Left colon (tissue), 2 donors: ENCODE measurements at regions of chr20 and their contacts with region 1.

Region 1: DNA sequence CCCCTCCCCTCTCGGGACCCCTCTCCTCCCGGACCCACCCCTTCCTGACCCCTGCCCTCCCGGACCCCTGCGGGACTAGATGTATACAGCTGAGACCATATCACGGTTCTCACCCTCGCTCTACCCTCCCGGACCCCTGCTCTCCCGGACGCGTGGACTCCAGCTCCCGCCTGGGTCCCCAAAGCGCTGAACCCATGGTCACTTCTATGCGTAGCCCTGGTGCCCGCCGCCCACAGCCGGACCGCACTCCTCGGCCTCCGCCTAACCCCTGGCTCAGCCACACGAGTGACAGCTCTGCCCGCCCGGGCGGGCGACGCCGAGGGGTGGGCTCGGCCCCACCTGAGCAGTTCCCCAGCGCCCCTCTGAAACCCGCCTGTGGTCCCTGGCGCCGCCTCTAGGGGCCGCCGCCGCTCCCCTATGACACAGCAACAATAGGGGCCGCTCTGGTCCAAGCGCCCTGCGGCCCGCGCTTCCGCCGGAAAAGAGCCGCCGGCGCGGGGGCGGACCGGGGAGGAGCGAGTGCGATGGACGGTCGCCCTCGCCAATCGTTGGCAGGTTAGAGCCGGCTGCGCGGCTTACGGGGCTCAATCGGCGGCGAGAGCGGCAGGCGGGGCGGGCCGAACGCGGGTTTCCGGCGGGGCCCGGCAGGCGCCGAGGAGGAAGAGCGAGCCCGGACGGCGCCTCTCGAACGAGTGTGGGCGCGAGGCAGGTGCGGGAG is at the start of gene ADRM1:
- DNase-seq: peak; percentile 92 to 95
- ATAC-seq: peak; percentile 85
- total RNA-seq, gene ADRM1: 67.2 to 73.1 TPM

Region 2: DNA sequence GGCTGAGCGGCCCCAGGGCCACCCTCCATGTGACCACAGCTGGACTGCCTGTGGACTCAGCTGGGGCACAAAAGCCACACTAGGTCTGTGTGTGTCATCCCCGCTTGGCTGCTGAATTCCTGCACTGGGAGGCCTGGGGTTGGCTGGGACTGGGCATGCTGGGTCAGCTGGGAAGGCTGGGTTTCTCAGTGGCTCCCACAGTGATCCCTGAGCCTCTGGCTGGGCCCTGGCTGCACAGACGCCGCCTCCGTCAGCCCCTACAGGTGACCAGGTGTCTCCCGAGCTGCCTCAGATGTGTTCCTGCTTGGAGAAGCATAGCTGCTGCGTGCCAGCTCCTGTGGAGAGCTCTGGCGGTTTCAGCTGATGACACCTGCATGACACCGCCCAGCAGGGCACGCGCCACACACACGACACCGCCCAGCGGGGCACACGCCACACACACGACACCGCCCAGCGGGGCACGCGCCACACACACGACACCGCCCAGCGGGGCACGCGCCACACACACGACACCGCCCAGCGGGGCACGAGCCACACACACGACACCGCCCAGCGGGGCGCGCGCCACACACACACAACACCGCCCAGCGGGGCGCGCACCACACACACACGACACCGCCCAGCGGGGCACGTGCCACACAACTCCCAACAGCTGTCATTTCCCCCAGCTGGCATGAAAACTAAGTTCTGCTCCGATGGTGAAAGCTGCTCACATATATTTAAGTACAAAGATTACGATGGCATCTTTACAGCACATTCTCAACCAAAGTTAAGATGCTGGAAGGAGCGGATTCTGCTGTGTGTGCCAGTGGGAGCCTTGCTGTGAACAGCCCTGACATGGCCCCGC is 325.6 kb before region 1 on chr20:
- intact Hi-C with region 1: no loop called
- DNase-seq: no peak
- ATAC-seq: no peak

Region 3: DNA sequence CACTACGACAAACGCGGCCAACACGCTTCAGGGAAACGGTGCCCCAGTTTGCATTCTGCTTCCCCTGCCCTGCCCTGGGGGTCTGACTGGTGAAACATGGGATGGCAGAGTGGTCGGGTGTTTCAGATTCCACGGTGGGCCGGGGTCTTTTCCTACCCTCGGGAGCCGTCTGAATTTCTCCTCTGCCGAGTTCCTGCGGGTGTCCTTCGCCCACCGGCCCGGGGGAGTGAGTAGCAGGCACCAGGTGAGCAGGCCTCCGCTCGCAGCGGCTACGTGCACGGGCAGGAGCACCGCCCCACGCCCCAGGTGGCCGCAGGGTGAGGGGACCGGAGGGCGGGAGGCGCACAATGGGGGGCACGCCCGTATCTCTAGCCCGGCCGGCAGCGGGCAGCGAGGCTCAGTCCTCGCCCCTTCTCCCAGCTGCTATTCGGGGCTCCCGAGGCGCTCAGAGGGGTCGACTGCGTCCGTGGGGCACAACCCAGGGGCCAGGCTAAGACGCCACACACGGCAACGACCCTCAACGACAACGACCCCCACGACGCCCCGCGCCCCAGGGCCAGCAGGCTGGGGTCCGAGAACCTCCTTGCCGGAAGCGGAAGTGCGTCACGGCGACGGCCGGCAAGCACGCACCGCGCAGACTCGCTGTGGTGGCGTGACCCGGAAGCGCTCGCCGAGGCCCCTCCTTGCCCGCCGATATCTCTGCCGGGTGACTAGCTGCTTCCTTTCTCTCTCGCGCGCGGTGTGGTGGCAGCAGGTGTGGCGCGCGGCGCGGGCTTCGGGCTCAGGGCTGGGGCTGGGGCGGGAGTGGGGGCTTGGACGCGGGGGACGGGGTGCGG is 84.1 kb after region 1 on chr20 and contains the start of gene RPS21:
- intact Hi-C with region 1: loop called (anchors 10 kb)
- DNase-seq: peak; percentile 94
- ATAC-seq: peak; percentile 90
- total RNA-seq, gene RPS21: 1,150 to 1,291 TPM